SK-N-SH (cell line): ENCODE measurements at regions of chr2 and their contacts with region 1.

Region 1: DNA sequence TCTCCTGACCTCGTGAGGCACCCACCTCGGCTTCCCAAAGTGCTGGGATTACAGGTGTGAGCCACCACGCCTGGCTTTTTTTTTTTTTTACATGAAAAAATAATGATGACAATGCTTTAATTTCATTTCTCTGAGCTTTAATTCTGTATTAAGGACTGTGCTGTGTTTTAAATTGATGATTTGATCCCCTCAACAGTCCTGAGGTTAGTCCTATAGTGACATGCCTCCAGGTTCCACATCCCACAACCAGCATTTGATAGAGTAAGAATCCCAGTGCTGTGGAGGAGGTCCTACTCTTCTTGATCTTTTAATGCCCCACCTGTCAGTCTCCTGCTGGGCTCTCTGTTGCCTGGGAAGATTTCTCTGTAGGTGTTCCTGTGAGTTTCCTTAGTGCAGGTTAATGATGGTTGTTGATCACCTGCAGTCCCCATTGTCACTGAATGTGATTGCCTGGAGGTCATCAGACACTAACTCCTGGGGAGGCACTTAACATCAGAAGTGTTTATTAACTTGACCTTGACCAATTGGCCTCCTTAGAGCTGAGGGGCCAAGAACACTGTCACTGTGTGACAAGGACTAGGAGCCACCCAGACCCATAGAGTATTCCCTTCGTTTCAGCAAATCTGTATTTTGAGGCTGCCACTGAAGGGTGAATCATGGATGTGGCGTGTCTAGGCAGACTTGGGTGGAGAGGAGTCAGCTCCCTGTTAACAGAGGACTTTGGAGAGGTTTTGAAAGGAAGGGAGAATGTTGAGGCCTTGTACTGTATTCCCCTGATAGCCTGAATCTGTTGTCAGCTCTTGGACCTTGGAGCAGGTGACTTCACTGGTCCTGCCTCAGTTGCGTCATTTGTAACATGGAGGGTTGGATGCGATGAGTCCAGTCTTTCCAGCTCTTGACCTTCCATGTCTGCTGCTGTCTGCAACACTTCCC is 11.5 kb downstream of the ASAP2 start:
- DNase-seq: no peak
- H3K4me3 ChIP-seq: no peak overlapping the region
- H3K27ac ChIP-seq: peak overlapping the region in 1 of 2 experiments; percentile 53; a peak in 3 of 4 replicates
- H3K4me1 ChIP-seq: peaks cover 24 to 36% of the 10 kb centered on the region in 2 experiments; a peak in 3 of 4 replicates
- H3K27me3 ChIP-seq: no peaks in the 10 kb centered on the region
- CTCF ChIP-seq: no peak
- EP300 ChIP-seq: no peak
- RAD21 ChIP-seq: no peak

Region 2: GRCh38 chr2:9228088-9228751 is 10.1 kb after region 1 on chr2:
- CTCF ChIA-PET with region 1: interaction called, 11 read pairs
- POLR2A ChIA-PET with region 1: interaction called, 4 read pairs
- DNase-seq: no peak
- H3K4me3 ChIP-seq: no peak overlapping the region
- H3K27ac ChIP-seq: peak overlapping the region; percentile 99 to 100
- H3K4me1 ChIP-seq: peaks cover 74 to 90% of the 10 kb centered on the region in 2 experiments
- H3K27me3 ChIP-seq: no peaks in the 10 kb centered on the region
- CTCF ChIP-seq: no peak
- EP300 ChIP-seq: peak; percentile 69 to 95
- RAD21 ChIP-seq: no peak

Region 3: GRCh38 chr2:9341337-9341887 is 123.3 kb after region 1 on chr2:
- CTCF ChIA-PET with region 1: no interaction called
- POLR2A ChIA-PET with region 1: no interaction called
- DNase-seq: no peak
- H3K4me3 ChIP-seq: no peak overlapping the region
- H3K27ac ChIP-seq: no peak overlapping the region
- H3K4me1 ChIP-seq: peaks cover 12 to 17% of the 10 kb centered on the region in 2 experiments
- H3K27me3 ChIP-seq: no peaks in the 10 kb centered on the region
- CTCF ChIP-seq: no peak
- EP300 ChIP-seq: no peak
- RAD21 ChIP-seq: no peak

Region 4: DNA sequence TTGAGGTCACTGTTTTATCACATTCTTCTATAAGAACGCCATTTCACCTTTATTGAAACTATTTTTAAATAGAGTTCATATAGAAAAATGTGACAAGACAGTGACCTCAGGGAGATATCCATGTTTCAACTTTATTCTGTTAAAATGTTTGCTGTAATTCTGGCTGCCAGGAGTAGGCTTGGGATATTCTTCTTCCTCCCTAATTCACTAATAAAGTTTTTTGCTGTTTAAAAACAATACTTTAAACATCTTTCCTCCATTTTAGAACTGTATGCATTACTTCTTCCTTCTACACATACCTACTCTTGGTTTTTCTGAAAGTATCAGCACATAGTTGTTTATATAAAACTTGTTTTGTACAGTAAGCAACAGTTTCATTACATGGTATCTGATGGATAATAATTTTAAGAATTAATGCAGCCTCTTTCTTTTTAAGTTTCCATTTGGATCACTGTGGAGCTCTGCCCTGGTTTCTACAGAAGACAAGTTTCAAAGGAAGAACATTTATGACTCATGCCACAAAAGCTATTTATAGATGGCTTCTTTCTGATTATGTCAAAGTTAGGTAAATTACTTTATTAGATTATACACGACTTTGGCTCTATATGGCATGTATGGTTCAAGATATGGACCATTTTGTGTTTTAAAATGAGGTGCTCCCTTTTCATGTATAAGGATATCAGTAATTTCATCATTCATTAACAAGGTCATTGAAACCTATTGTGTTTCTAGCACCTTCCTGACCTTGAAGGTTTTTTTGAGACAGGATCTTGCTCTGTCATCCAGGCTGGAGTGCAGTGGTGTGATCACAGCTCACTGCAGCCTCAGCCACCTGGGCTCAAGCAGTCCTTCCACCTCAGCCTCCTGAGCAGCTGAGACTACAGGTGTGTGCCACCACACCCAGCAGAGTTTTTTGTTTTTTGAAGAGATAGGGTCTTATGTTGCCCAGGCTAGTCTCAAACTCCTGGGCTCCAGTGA is 212.5 kb after region 1 on chr2:
- CTCF ChIA-PET with region 1: no interaction called
- POLR2A ChIA-PET with region 1: no interaction called
- DNase-seq: no peak
- H3K4me3 ChIP-seq: no peak overlapping the region
- H3K27ac ChIP-seq: peak overlapping the region; percentile 51 to 71; a peak in 3 of 4 replicates
- H3K4me1 ChIP-seq: peaks cover 0 to 22% of the 10 kb centered on the region in 2 experiments; a peak in 3 of 4 replicates
- H3K27me3 ChIP-seq: no peaks in the 10 kb centered on the region
- CTCF ChIP-seq: no peak
- EP300 ChIP-seq: no peak
- RAD21 ChIP-seq: no peak